Cardiac septum (tissue), 1 donor: ENCODE measurements at regions of chr10 and their contacts with region 1.

Region 1: DNA sequence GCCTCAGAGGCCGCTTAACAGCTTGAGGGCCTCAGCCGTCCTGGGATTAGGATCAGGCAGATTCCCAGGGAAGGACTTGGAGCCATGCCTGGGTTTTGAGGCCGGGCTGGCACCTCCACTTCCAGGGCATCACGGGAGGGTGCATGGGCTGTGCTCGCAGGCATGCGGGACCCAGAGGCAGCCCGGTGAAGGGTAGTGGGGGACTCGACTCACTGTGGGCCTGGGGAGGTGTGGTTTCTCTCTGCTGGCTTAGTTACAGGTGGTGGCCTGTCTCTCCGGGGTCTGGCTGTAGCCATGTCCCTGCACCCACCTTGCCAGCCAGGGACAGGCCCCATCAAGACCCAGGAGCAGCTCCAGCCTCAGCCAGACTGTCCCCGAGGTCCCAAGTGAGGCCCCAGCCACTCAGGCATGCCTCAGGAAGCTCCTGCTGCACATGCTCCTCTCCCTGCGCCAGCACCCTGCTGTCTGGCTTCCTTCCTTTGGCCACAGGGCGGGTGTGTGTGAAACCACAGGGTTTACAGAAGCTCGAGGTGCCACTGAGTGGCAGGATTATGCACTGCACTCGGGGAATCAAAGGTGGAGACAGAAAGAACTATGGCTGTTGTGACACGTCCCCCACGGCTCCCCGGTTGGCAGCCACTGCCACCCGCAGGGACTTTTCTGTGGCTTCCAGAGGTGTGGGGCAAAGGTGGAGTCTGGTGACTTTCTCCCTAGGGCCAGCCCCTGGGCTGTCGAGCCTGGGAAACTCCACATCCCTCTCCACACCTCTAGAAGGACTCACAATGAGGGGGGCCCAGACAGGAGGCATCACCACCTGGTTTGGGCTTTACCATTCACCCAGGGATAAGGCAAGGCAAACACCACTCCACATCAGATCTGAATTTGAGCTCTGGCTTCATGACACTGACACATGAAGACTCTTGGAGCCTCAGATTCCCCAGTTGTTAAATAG is 19.7 kb downstream of the GOLGA7B start:
- DNase-seq: peak; percentile 89

Region 2: DNA sequence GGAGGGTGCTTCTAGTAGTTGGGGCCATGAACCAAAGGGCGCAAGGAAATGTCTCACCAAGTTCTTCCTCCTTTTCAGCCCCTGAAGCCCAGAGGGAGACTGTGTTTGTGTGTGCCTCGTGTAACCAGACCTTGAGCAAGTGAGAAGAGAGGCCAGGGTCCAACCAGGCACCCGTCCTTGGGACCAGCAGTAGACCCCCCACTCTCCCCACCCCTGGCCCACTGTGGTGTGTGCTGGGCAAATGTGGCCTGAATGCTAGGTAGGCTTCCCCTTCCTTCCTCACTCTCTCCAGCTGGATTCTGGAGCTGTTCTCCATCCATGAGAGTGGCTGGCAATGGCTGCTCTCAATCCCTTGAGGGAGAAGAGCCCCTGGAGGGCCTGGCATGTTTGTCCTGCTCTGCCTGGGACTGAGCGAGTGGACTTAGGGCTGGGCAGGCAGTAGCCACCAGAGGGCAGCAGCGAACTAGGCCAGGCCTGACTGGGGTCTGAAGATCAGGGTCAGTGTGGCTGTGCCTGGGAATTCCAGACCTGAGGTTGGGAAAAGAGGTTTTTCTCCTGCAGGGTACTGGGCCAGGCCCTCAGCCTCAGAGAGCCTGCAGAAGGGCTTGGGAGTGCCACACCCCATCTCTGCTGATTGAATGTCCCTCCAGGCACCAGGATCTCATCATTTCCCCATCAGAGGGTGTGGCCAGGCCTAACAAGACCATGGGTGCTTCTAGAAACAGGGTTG is 110.0 kb before region 1 on chr10:
- intact Hi-C with region 1: loop called (anchors 2 kb)
- DNase-seq: no peak

Region 3: GRCh38 chr10:97791713-97792140 is 77.6 kb before region 1 on chr10:
- intact Hi-C with region 1: loop called (anchors 1 kb)
- DNase-seq: no peak

Region 4: GRCh38 chr10:97822261-97822687 is 47.1 kb before region 1 on chr10:
- intact Hi-C with region 1: no loop called
- DNase-seq: no peak